HepG2 (cell line): ENCODE measurements at regions of chr3 and their contacts with region 1.

Region 1: GRCh38 chr3:130892759-130893375 is 1.0 kb upstream of the ATP2C1 start:
- DNase-seq: peak; percentile 76
- ATAC-seq: peak; percentile 70
- H3K4me3 ChIP-seq: peak overlapping the region; percentile 96 to 100 (median 98)
- H3K27ac ChIP-seq: peak overlapping the region; percentile 89
- H3K4me1 ChIP-seq: peaks cover 35% of the 10 kb centered on the region
- H3K27me3 ChIP-seq: no peaks in the 10 kb centered on the region; a peak in 1 of 5 replicates
- CTCF ChIP-seq: peak; percentile 83
- EP300 ChIP-seq: no peak
- POLR2A ChIP-seq: no peak
- RAD21 ChIP-seq: peak; percentile 70

Region 2: DNA sequence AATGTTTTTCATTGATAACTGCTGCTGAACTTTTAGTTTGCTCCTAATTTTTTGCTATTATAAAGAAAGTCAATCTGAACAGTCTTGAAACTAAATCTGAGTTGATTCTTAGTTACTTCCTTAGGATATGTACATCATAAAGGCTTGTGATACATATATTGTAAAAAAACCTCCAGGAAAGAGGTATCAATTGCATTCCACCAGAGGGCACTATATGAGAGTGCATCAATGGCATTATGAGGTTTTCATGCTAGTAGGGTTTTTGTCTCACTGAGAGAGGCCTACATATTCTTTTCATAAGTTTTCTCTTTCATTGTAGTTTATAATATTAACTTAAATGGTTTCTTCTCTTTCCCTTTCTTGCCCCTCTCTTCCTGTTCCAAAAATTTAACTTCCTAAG is 193.1 kb before region 1 on chr3:
- CTCF ChIA-PET with region 1: interaction called, 16 read pairs
- POLR2A ChIA-PET with region 1: no interaction called
- in situ Hi-C with region 1: no loop called
- intact Hi-C with region 1: loop called (anchors 1 kb)
- DNase-seq: peak; percentile 30
- ATAC-seq: peak; percentile 51; the same call in 2 of the 3 replicates
- H3K4me3 ChIP-seq: no peak overlapping the region
- H3K27ac ChIP-seq: no peak overlapping the region
- H3K4me1 ChIP-seq: peaks cover 15% of the 10 kb centered on the region
- H3K27me3 ChIP-seq: no peaks in the 10 kb centered on the region
- CTCF ChIP-seq: peak; percentile 51
- EP300 ChIP-seq: no peak
- POLR2A ChIP-seq: no peak
- RAD21 ChIP-seq: no peak

Region 3: DNA sequence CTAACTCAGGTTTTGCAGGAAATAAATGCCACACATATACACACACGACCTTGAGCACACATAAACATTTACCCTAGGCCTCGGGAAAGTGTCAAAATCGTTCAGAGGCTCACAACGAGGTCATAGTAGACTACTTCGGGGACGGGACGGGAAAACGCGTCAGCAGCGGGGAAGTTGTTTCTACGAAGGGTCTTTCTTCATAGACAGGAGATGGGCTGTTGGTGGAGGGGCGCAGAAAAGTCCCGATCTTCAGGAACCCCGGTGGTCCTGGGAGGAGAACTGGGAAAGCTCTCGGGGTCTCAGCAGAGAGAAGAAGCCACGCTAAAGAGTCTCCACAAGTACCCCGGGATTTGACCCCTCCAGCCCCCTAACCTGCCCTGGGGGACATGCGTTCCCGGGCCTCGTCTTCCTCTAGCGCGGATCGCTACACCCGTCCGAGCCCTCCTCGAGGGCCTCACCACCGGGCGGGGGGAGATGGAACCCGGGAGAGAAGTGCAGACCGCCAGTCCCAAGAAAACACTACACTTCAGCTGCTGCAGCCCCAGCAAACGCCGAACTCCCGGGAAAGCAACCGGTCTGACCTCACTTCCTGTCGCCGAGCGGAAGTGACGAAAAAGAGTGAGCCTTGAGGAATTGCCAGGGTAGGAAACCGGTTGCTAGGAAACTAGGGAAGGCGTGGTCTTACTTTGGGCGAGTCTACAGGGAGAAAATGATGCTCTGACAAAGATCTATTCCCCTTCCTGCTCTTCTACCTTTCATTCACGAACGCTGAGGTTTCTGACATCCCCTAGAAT is 146.4 kb before region 1 on chr3 and contains the start of gene PIK3R4:
- CTCF ChIA-PET with region 1: no interaction called
- POLR2A ChIA-PET with region 1: interaction called, 5 read pairs
- in situ Hi-C with region 1: loop called (anchors 5 kb)
- intact Hi-C with region 1: no loop called
- DNase-seq: peak; percentile 98
- ATAC-seq: peak; percentile 84
- H3K4me3 ChIP-seq: peak within 1 kb of the TSS; percentile 81 to 95 (median 94)
- H3K27ac ChIP-seq: peak within 1 kb of the TSS; percentile 85
- H3K4me1 ChIP-seq: peaks cover 60% of the 10 kb centered on the region
- H3K27me3 ChIP-seq: no peaks in the 10 kb centered on the region; a peak in 1 of 5 replicates
- CTCF ChIP-seq: no peak
- EP300 ChIP-seq: no peak
- POLR2A ChIP-seq: peak; percentile 74 to 79
- RAD21 ChIP-seq: no peak
- total RNA-seq, gene PIK3R4: 26.0 and 29.7 TPM in 2 replicates

Region 4: DNA sequence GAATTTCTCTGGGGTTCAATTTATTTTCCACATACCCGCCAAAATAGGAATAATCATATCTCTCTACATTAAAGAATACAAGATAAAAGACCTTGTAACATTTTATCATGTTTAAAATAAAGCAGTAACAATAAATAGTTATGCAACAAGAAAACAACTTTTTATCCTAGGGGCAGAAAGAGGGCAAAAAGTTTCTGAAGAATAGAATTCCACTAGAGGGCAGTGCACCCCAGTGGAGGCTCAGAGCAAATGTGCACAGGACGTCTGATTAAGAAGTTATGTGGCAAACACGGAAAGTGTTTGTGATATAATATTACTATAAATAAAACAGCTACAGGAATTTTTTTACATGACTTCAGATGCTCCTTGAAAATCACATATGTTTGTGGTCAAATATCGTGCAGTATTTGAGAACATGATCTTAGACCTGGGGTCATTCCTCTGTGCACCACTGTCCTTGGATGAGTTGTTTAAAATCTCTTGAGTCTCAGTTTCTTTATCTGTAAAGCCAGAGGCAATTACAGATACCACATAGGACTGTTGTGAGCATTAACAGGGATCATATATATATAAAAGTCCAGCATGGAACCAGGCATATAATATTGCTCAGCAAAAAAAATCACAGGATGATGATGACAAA is 133.0 kb before region 1 on chr3:
- CTCF ChIA-PET with region 1: interaction called, 19 read pairs
- POLR2A ChIA-PET with region 1: no interaction called
- in situ Hi-C with region 1: no loop called
- intact Hi-C with region 1: loop called (anchors 1 kb)
- DNase-seq: peak; percentile 41
- ATAC-seq: peak; percentile 72
- H3K4me3 ChIP-seq: no peak overlapping the region
- H3K27ac ChIP-seq: no peak overlapping the region
- H3K4me1 ChIP-seq: no peaks in the 10 kb centered on the region
- H3K27me3 ChIP-seq: peaks cover 0 to 2% of the 10 kb centered on the region in 2 experiments; a peak in 2 of 5 replicates
- CTCF ChIP-seq: peak; percentile 73
- EP300 ChIP-seq: no peak
- POLR2A ChIP-seq: no peak
- RAD21 ChIP-seq: peak; percentile 44; the same call in 1 of the 2 replicates

Region 5: DNA sequence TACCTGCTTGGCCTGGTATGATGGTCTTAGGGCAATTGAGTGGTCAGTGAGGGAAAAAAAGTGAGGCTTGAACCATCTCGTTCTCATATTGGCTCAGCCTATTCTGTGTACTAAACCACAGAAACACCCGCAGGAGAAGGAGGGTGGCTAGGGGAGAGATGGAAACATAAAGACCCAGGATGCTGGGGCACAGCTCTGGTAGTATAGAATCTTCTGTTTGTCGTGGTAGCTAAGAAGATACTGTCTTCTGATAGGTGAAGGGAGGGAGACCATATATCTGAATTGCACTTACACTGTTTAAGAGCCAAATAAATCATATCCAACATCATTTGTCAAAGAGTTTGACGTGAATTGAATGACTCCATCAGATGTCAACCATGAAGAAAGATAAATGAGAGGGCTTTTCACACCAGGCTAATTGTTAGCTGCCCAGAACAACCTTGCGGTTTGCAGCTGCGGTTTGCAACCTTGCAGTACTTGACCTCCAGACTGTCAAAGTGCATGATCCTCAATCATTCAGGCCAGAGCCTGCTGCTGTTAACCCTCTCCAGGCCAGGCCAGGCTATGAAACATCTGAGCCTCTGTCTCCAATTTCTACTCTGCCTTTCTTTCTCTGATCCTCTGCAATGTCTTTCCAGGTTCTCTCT is 105.3 kb before region 1 on chr3:
- CTCF ChIA-PET with region 1: no interaction called
- POLR2A ChIA-PET with region 1: no interaction called
- in situ Hi-C with region 1: no loop called
- intact Hi-C with region 1: no loop called
- DNase-seq: no peak
- ATAC-seq: no peak
- H3K4me3 ChIP-seq: no peak overlapping the region
- H3K27ac ChIP-seq: no peak overlapping the region
- H3K4me1 ChIP-seq: no peaks in the 10 kb centered on the region
- H3K27me3 ChIP-seq: no peaks in the 10 kb centered on the region; a peak in 1 of 5 replicates
- CTCF ChIP-seq: no peak
- EP300 ChIP-seq: no peak
- POLR2A ChIP-seq: no peak
- RAD21 ChIP-seq: no peak

Region 6: DNA sequence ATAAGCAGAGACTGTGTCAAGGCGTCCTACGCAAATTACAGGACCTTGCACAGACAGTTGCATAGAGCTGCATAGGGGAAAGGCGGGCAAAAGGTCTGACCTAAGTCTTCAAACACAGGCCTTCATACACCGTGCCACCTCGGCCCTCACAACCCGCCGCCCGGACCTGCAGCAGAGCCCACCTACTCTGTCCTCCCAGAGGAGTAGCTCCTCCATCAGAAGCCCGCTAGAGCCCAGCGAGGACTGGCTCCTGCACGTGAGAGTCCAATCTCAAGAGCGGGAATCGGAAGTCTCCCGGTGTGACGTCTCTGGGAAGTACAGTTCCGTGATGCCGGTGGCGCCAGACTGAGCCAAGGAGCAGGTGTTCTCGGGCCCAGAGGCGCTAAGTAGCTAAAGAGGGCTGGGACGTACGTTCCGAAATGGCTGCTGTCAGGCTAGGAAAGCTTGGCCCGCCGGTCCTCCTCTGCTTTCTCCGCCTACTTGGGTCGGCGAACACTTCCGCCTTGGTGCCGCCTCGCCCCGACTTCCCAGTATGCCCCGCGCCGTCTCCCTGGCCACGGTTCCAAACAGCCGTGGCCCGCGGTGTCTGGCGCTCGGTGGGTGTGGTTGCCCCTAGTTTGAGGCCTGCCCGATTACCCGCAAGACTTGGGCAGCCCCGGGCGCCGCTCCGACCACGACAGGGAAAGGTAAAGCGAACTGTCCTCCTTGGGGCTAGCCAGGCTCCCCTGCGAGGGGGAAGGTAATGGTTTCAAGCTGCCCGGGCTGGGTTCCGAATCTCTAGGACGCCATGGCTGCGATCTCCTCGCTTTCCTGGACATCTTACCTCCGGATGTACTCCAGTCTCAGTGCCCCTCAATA is 133.7 kb after region 1 on chr3 and contains the starts of genes ASTE1 and NEK11:
- CTCF ChIA-PET with region 1: no interaction called
- POLR2A ChIA-PET with region 1: interaction called, 14 read pairs
- in situ Hi-C with region 1: no loop called
- intact Hi-C with region 1: loop called (anchors 5 kb)
- DNase-seq: peak; percentile 70
- ATAC-seq: peak; percentile 99
- H3K4me3 ChIP-seq: peak within 1 kb of the TSS; percentile 67 to 86 (median 81)
- H3K27ac ChIP-seq: peak within 1 kb of the TSS; percentile 82
- H3K4me1 ChIP-seq: peaks cover 20% of the 10 kb centered on the region
- H3K27me3 ChIP-seq: no peaks in the 10 kb centered on the region
- CTCF ChIP-seq: peak; percentile 15; the same call in 1 of the 2 replicates
- EP300 ChIP-seq: no peak
- POLR2A ChIP-seq: peak; percentile 78 to 86
- RAD21 ChIP-seq: no peak
- total RNA-seq, gene ASTE1: 7.9 and 10.5 TPM in 2 replicates
- total RNA-seq, gene NEK11: 2.2 and 2.4 TPM in 2 replicates

Region 7: GRCh38 chr3:131033480-131034080 is 140.7 kb after region 1 on chr3:
- CTCF ChIA-PET with region 1: no interaction called
- POLR2A ChIA-PET with region 1: no interaction called
- in situ Hi-C with region 1: no loop called
- intact Hi-C with region 1: loop called (anchors 5 kb)
- DNase-seq: peak; percentile 43
- ATAC-seq: peak; percentile 55; the same call in 2 of the 3 replicates
- H3K4me3 ChIP-seq: no peak overlapping the region
- H3K27ac ChIP-seq: no peak overlapping the region
- H3K4me1 ChIP-seq: no peaks in the 10 kb centered on the region
- H3K27me3 ChIP-seq: no peaks in the 10 kb centered on the region
- CTCF ChIP-seq: peak; percentile 67
- EP300 ChIP-seq: no peak
- POLR2A ChIP-seq: no peak
- RAD21 ChIP-seq: no peak